Colonic mucosa (tissue), 4 donors: ENCODE measurements at regions of chr6 and their contacts with region 1.

Region 1: DNA sequence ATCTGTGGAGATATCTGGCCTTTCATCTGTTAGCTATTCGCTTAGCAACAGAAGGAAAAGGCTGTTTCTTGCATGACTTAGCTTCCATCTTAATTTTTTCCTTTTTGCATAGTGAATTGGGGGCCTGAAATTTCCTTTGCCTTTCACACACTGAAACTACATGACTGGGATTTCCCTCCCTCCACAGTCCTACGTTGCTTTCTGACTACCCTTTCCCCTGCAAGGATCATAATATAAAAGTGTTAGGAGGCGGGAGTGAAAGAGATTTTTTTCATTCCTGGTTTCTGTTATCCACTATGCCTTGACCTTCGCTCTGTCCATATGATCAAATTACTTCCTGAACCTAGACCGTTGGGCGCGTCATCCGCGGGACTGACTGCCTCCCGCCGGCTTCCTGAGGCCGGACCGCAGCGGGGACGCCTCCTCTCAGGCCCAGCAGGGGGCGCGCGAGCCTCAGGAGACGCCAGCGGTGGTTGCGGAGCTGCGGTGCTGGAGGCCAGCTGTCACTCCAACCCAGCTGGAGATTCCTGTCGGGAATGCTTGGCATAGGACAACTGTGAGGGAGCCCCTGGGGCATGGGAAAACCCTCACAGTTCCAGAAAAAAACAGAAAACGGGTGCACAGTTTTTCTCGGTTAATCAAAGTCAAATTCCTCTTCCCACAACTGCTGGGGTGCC is 55.6 kb downstream of the MEP1A start:
- DNase-seq: peak; percentile 91
- H3K4me3 ChIP-seq: no peak overlapping the region
- H3K27ac ChIP-seq: no peak overlapping the region
- H3K4me1 ChIP-seq: peaks cover 3% of the 10 kb centered on the region
- H3K27me3 ChIP-seq: no peaks in the 10 kb centered on the region
- CTCF ChIP-seq: peak; percentile 93

Region 2: GRCh38 chr6:46521464-46521971 is 327.3 kb before region 1 on chr6:
- intact Hi-C with region 1: no loop called
- DNase-seq: no peak
- H3K4me3 ChIP-seq: no peak overlapping the region
- H3K27ac ChIP-seq: no peak overlapping the region
- H3K4me1 ChIP-seq: no peaks in the 10 kb centered on the region
- H3K27me3 ChIP-seq: no peaks in the 10 kb centered on the region
- CTCF ChIP-seq: no peak

Region 3: GRCh38 chr6:46993846-46994245 is 145.0 kb after region 1 on chr6:
- intact Hi-C with region 1: loop called (anchors 5 kb)
- DNase-seq: no peak
- H3K4me3 ChIP-seq: no peak overlapping the region
- H3K27ac ChIP-seq: no peak overlapping the region
- H3K4me1 ChIP-seq: no peaks in the 10 kb centered on the region
- H3K27me3 ChIP-seq: no peaks in the 10 kb centered on the region
- CTCF ChIP-seq: no peak

Region 4: GRCh38 chr6:47047479-47048407 is 198.9 kb after region 1 on chr6:
- intact Hi-C with region 1: loop called (anchors 5 kb)
- DNase-seq: peak; percentile 60
- H3K4me3 ChIP-seq: no peak overlapping the region
- H3K27ac ChIP-seq: no peak overlapping the region
- H3K4me1 ChIP-seq: no peaks in the 10 kb centered on the region
- H3K27me3 ChIP-seq: no peaks in the 10 kb centered on the region
- CTCF ChIP-seq: peak; percentile 54

Region 5: GRCh38 chr6:47061309-47062300 is 212.8 kb after region 1 on chr6:
- intact Hi-C with region 1: no loop called
- DNase-seq: no peak
- H3K4me3 ChIP-seq: no peak overlapping the region
- H3K27ac ChIP-seq: no peak overlapping the region
- H3K4me1 ChIP-seq: no peaks in the 10 kb centered on the region
- H3K27me3 ChIP-seq: no peaks in the 10 kb centered on the region
- CTCF ChIP-seq: no peak

Region 6: GRCh38 chr6:47309291-47310130 is 460.7 kb after region 1 on chr6 and contains the start of gene TNFRSF21:
- intact Hi-C with region 1: loop called (anchors 10 kb)
- DNase-seq: peak; percentile 96
- H3K4me3 ChIP-seq: peak within 1 kb of the TSS; percentile 88
- H3K27ac ChIP-seq: peak within 1 kb of the TSS; percentile 93
- H3K4me1 ChIP-seq: no peaks in the 10 kb centered on the region
- H3K27me3 ChIP-seq: no peaks in the 10 kb centered on the region
- CTCF ChIP-seq: peak; percentile 86
- total RNA-seq, gene TNFRSF21: 74.0 to 102 TPM